Aorta (tissue), 5 donors: ENCODE measurements at regions of chr2 and their contacts with region 1.

Region 1: GRCh38 chr2:74233648-74234047 is 35.2 kb downstream of the MTHFD2 start:
- DNase-seq: no peak
- ATAC-seq: no peak
- H3K4me3 ChIP-seq: no peak overlapping the region
- H3K27ac ChIP-seq: no peak overlapping the region
- H3K4me1 ChIP-seq: no peaks in the 10 kb centered on the region
- H3K27me3 ChIP-seq: no peaks in the 10 kb centered on the region

Region 2: DNA sequence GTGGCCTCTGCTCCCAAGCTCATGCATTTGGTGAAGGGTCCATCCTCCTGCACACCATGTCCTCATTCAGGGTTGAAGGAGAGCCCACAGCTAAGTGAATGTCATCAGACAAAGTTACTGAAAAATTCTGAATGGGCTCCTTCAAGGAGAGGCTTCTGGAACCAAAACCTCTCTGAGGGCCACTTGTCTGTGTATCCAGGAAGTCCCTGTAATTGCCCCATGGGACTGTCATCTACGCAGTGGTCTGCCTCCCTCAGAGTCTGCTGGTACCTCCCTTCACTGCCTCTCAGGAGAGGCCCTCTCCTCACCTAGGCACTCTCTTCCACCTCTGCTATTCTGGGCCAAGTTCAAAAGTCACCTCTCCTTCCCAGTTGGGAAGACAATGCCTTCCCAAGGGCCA is 41.6 kb after region 1 on chr2:
- intact Hi-C with region 1: loop called in 1 of 2 experiments (anchors 2 kb)
- DNase-seq: no peak
- ATAC-seq: no peak
- H3K4me3 ChIP-seq: no peak overlapping the region
- H3K27ac ChIP-seq: no peak overlapping the region
- H3K4me1 ChIP-seq: no peaks in the 10 kb centered on the region
- H3K27me3 ChIP-seq: no peaks in the 10 kb centered on the region

Region 3: GRCh38 chr2:74334931-74335333 is 101.3 kb after region 1 on chr2:
- intact Hi-C with region 1: no loop called
- DNase-seq: peak; percentile 81 to 89
- ATAC-seq: peak; percentile 88
- H3K4me3 ChIP-seq: no peak overlapping the region
- H3K27ac ChIP-seq: no peak overlapping the region
- H3K4me1 ChIP-seq: no peaks in the 10 kb centered on the region
- H3K27me3 ChIP-seq: no peaks in the 10 kb centered on the region

Region 4: DNA sequence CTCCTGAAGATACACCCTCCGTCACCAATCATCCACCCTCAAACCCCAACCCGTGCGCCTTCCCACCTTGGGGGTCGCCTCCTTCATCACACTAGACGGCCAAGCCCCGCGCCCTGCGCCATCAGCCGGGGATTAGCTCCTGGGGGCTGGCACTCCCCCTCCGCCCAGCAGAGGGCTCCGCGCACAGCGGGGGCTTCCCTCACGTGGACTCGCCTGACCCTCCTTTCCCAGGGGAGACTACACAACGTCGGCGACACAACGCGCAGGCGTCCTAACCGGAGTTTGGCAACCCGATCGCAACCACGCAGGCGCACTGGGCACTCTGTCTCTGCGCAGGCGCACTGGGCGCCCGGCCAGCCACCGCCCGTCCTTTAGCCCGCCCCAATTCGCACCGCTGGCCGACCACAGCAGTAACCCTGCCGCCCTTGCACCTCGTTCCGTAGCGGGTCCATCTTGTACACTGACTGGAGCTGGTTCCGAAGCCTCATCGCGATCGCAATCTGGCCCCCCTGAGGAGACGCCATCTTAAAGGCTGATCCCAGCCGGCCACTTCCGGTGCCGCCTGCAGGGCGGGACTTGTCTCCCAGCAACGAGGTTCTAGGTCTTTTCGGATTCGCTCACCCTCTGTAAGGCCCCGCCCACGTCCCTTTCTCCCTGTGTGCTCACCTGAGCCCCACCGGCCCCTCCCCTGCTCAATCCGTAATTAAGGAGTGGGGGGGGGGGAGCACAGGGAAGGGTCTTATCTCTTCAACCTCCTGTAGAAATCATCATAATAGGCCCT is 273.7 kb after region 1 on chr2 and contains the start of gene PCGF1:
- intact Hi-C with region 1: no loop called
- DNase-seq: peak; percentile 99 to 100
- ATAC-seq: peak; percentile 96
- H3K4me3 ChIP-seq: peak within 1 kb of the TSS; percentile 16 to 51
- H3K27ac ChIP-seq: peak within 1 kb of the TSS in 1 of 2 donors; percentile 79
- H3K4me1 ChIP-seq: no peaks in the 10 kb centered on the region
- H3K27me3 ChIP-seq: no peaks in the 10 kb centered on the region
- total RNA-seq, gene PCGF1: 13.3 to 15.9 TPM